ENCODE measurements at regions of chr12 and their contacts with region 1.

Region 1: GRCh38 chr12:93302331-93303229 is 75.1 kb upstream of the NUDT4 start:
- DNase-seq: peak in 1 of 2 donors; percentile 70
- ATAC-seq: peak; percentile 50 to 90 (median 81)
- H3K4me3 ChIP-seq: no peak overlapping the region
- H3K27ac ChIP-seq: peak overlapping the region; percentile 30 to 78 (median 62)
- H3K4me1 ChIP-seq: peaks cover 0 to 39% (median 26%) of the 10 kb centered on the region in 9 donors
- H3K27me3 ChIP-seq: no peaks in the 10 kb centered on the region
- CTCF ChIP-seq: no peak

Region 2: DNA sequence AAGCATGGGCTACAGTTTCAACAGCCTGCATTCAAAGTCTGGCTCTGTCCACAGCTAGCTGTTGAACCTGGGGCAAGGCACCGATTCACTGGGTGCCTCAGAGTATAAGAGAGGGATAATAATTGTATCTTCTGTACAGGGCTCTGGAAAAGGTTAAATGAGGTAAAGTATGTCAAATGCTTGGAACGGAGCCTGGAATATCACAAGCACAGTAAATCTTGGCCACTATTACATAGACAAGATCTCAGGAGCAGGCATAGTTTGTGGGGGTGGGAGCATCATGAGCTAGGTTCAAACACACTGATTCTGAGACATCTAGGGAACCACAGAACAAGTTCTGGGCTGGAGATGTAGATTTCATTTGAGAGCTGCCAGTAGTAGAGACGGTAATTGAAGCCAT is 128.5 kb before region 1 on chr12:
- intact Hi-C with region 1: loop called in 1 of 10 experiments (anchors 5 kb)
- DNase-seq: peak in 1 of 2 donors; percentile 35
- ATAC-seq: peak; percentile 63 to 86 (median 74)
- H3K4me3 ChIP-seq: no peak overlapping the region
- H3K27ac ChIP-seq: peak overlapping the region; percentile 3 to 87 (median 76)
- H3K4me1 ChIP-seq: peaks cover 8 to 57% (median 36%) of the 10 kb centered on the region in 9 donors
- H3K27me3 ChIP-seq: no peaks in the 10 kb centered on the region
- CTCF ChIP-seq: no peak

Region 3: GRCh38 chr12:93183940-93184671 is 118.5 kb before region 1 on chr12:
- intact Hi-C with region 1: loop called in 2 of 10 experiments (anchors 5 kb)
- DNase-seq: peak in 1 of 2 donors; percentile 65
- ATAC-seq: peak; percentile 66 to 92 (median 86)
- H3K4me3 ChIP-seq: no peak overlapping the region
- H3K27ac ChIP-seq: peak overlapping the region; percentile 77 to 92 (median 88)
- H3K4me1 ChIP-seq: peaks cover 9 to 34% (median 24%) of the 10 kb centered on the region in 9 donors
- H3K27me3 ChIP-seq: no peaks in the 10 kb centered on the region
- CTCF ChIP-seq: no peak

Region 4: DNA sequence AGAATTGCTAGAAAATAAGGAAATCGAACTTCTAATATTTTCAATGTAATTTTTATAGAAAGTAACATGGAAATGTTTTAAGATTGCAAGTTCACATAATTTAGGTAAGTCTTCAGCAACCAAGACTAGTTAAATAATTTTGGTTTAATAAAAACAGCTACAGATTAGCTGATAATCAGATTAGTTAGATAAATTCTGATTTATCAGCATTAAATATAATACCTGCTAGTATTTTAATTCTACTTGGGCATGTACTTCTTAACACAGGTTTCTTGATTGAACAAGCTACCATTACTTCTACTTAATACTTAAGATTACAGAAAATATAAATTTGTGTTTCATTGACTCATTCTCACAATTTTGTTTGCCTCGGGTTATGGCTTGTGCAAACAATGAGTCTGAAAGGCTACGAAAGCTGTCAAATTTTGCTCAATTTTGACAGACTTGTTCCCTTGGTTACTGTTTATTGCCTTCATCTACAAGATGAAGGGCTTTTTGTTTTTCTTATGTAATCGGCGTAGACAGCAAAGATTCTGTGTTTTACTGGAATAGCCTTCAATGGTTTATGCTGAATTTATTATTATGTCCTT is 41.0 kb before region 1 on chr12:
- intact Hi-C with region 1: no loop called
- DNase-seq: no peak
- ATAC-seq: no peak
- H3K4me3 ChIP-seq: no peak overlapping the region
- H3K27ac ChIP-seq: no peak overlapping the region
- H3K4me1 ChIP-seq: peaks cover 0 to 7% (median 2%) of the 10 kb centered on the region in 9 donors
- H3K27me3 ChIP-seq: no peaks in the 10 kb centered on the region
- CTCF ChIP-seq: no peak

Measured in heart right ventricle (tissue), 16 donors.